Activated naive CD4-positive, alpha-beta T cell treated with anti-CD3 and anti-CD28 coated beads, Interleukin-2, amount 10 ng/mL, durations not matched to agents 7 days and 5 days (primary cell): ENCODE measurements at regions of chr1 and their contacts with region 1.

Region 1: GRCh38 chr1:2561898-2562545 is 5.9 kb downstream of the TNFRSF14 start:
- DNase-seq: peak; percentile 41
- H3K4me3 Mint-ChIP-seq: no peak overlapping the region
- H3K27ac Mint-ChIP-seq: no peak overlapping the region
- H3K4me1 Mint-ChIP-seq: peaks cover 24% of the 10 kb centered on the region
- H3K27me3 Mint-ChIP-seq: no peaks in the 10 kb centered on the region

Region 2: DNA sequence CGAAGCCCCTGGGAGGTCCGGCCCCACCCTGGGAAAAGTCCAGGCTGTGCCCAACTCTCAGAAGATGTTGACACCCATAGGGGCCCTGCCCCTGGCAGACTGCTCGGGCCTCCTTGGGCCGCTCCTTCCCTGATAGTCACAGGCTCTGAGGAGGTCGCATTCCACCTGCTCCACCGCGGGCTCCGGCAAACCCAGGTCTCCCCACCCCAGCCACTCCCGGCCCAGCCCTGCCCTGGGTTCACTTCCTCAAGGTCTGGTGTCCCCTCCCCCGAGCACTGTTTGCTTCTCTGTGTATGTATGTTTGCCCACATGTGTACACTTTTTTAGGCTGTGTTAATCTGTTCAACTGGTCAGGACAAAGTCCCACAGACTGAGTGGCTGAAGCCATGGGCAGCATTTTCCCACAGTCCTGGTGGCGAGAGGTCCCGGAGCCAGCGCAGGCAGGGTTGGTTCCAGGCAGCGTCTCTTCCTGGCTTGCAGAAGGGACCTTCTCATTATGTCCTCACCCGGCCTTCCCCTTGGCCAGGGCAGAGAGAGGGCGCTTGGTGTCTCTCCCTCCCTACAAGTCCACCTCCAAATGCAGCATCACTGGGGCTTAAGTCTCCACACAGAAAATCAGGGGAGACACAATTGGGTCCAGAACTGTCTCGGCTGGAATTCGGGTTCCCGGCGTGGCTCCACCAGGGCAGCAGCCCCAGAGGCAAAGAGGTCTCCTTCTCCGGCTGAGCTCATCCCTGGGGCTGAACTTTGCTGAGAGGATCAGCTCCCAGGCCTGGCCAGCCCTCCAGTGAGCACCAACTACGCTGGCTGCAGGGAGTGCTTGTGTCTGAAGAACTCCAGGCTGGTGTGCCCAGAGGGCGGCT is 14.0 kb after region 1 on chr1:
- CTCF ChIA-PET with region 1: interaction called, 16 read pairs
- DNase-seq: no peak
- H3K4me3 Mint-ChIP-seq: no peak overlapping the region
- H3K27ac Mint-ChIP-seq: peak overlapping the region; percentile 71
- H3K4me1 Mint-ChIP-seq: peaks cover 59% of the 10 kb centered on the region
- H3K27me3 Mint-ChIP-seq: peaks cover 5% of the 10 kb centered on the region

Region 3: DNA sequence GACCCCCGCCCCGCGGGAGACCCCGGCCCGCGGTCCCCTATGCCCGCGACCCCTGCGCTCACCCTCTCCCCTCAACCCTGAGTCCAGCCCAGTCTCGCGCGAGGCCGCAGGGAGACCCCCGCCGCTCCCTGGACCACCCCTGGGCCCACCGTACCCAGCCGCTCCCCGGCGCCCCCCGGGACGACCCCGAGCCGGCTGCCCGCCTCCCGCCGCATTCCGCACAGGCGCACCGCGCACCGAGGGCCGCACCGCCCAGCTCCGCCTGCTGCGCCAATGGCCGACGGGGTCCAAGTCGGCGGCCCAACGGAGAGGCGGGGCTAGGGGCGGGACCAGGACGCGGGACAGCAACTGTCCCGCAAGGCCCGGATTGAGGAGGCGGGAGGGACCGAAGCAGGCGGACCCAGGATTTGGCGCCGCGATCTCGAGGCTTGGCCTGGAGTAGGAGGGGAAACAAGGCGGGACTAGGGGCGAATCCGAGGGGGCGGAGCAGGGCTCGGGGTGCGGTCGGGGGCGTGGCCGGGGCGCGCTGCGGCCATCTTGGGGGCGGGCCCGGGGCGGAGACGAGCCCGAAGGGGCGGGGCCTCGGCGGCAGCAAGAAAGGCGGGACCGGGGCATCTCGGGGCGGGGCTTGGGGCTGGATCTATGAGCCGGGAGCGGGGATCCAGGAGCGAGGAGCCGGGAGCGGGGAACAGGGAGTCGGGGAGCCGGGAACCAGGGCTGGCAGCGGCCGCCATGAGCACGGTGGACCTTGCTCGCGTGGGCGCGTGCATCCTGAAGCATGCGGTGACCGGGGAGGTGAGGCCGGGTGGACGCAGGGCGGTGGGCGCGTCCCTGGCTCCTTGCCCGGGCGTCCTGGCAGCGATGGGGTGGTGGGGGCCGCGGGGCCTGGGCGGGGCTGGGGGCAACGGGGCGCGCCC is 24.4 kb after region 1 on chr1 and contains the start of gene PRXL2B:
- CTCF ChIA-PET with region 1: interaction called, 40 read pairs
- DNase-seq: peak; percentile 100
- H3K4me3 Mint-ChIP-seq: peak within 1 kb of the TSS; percentile 81
- H3K27ac Mint-ChIP-seq: peak within 1 kb of the TSS; percentile 95
- H3K4me1 Mint-ChIP-seq: peaks cover 36% of the 10 kb centered on the region
- H3K27me3 Mint-ChIP-seq: no peaks in the 10 kb centered on the region